ENCODE measurements at regions of chr17 and their contacts with region 1.

Region 1: GRCh38 chr17:4858882-4859260 is 25.7 kb downstream of the MINK1 start:
- DNase-seq: no peak
- H3K4me3 ChIP-seq: peak overlapping the region in 1 of 4 experiments; percentile 24; a peak in 2 of 8 replicates
- H3K27ac ChIP-seq: peak overlapping the region; percentile 62; the same call in 1 of the 2 replicates
- H3K4me1 ChIP-seq: peaks cover 22 to 41% (median 34%) of the 10 kb centered on the region in 4 experiments
- H3K27me3 ChIP-seq: no peaks in the 10 kb centered on the region
- CTCF ChIP-seq: no peak
- EP300 ChIP-seq: no peak
- POLR2A ChIP-seq: no peak
- RAD21 ChIP-seq: no peak

Region 2: DNA sequence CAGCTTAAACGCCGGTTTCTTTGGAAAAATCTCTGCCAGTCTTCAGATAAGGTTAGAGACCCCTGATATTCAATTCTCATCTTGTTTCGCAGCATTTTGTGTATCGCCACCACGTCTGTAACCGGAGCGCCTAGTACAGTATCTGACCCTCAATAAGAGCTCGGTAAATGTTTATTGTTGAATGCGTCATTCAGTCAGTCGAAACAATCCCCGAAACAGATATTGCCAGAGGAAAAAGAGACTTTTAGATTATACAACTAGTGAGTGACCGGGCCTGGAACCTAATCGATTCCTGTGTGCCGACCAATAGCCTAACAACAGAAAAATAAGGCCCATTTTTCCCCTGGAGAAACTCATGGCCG is 155.6 kb before region 1 on chr17:
- CTCF ChIA-PET with region 1: interaction called, 3 read pairs
- POLR2A ChIA-PET with region 1: interaction called, 10 read pairs
- DNase-seq: no peak
- H3K4me3 ChIP-seq: peak overlapping the region; percentile 91 to 98 (median 94)
- H3K27ac ChIP-seq: peak overlapping the region; percentile 87
- H3K4me1 ChIP-seq: peaks cover 0 to 20% (median 10%) of the 10 kb centered on the region in 4 experiments; a peak in 6 of 7 replicates
- H3K27me3 ChIP-seq: no peaks in the 10 kb centered on the region
- CTCF ChIP-seq: no peak
- EP300 ChIP-seq: no peak
- POLR2A ChIP-seq: no peak
- RAD21 ChIP-seq: no peak

Region 3: DNA sequence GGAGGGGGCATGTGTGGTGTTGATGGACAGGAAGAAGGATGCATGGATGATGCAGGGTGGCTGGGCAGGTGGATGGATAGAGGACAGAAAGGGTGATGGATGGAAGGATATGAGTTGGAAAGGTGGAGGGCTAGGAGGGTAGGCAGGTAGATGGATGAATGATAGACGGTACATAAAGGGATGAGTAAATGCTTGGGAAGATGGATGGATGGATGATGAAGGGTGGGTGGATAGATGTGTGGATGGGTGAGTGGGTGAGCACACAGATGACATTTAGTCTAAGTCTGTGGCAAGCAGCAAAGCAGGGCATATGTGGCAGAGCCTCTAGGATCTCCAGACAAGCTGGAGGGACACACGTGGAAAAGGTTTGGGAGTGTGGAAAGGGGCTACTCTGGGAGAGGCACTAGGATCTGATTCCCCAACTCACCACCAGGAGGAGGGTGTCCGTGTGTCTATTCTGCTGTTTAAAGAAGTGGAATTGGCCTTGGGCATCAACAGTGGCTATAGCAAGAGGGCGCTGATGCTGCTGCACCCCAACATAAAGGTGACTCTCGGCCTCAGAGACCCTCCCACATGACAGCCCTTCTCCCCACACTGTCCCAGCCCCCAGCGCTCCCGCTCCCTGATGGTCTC is 43.7 kb before region 1 on chr17:
- CTCF ChIA-PET with region 1: interaction called, 11 read pairs
- POLR2A ChIA-PET with region 1: interaction called, 3 read pairs
- DNase-seq: no peak
- H3K4me3 ChIP-seq: no peak overlapping the region
- H3K27ac ChIP-seq: no peak overlapping the region
- H3K4me1 ChIP-seq: no peaks in the 10 kb centered on the region
- H3K27me3 ChIP-seq: no peaks in the 10 kb centered on the region
- CTCF ChIP-seq: peak; percentile 58 to 80 (median 76)
- EP300 ChIP-seq: no peak
- POLR2A ChIP-seq: no peak
- RAD21 ChIP-seq: peak; percentile 54 to 59

Region 4: DNA sequence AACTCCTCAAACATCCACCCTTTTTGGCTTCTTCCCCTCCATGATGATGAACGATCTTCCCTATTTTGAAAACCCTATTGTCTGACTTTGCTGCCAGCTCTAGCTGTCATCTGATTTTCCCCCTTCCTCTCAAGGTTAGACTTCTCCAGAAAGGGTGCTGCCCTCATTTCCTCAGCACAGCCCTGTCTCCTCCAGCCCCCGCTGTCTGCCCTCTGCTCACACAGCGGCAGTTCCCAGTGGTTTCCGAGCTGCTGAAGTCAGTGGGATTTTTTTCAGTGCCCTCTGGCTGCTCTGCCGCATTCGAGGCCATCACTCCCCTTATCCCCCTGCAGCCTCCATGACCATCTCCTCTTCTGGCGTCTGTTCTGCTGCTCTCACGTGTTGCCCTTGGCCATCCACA is 13.9 kb after region 1 on chr17:
- CTCF ChIA-PET with region 1: interaction called, 13 read pairs
- POLR2A ChIA-PET with region 1: interaction called, 5 read pairs
- DNase-seq: no peak
- H3K4me3 ChIP-seq: no peak overlapping the region
- H3K27ac ChIP-seq: no peak overlapping the region
- H3K4me1 ChIP-seq: peaks cover 0 to 7% (median 4%) of the 10 kb centered on the region in 4 experiments; a peak in 6 of 7 replicates
- H3K27me3 ChIP-seq: no peaks in the 10 kb centered on the region
- CTCF ChIP-seq: no peak
- EP300 ChIP-seq: no peak
- POLR2A ChIP-seq: no peak
- RAD21 ChIP-seq: no peak

Region 5: DNA sequence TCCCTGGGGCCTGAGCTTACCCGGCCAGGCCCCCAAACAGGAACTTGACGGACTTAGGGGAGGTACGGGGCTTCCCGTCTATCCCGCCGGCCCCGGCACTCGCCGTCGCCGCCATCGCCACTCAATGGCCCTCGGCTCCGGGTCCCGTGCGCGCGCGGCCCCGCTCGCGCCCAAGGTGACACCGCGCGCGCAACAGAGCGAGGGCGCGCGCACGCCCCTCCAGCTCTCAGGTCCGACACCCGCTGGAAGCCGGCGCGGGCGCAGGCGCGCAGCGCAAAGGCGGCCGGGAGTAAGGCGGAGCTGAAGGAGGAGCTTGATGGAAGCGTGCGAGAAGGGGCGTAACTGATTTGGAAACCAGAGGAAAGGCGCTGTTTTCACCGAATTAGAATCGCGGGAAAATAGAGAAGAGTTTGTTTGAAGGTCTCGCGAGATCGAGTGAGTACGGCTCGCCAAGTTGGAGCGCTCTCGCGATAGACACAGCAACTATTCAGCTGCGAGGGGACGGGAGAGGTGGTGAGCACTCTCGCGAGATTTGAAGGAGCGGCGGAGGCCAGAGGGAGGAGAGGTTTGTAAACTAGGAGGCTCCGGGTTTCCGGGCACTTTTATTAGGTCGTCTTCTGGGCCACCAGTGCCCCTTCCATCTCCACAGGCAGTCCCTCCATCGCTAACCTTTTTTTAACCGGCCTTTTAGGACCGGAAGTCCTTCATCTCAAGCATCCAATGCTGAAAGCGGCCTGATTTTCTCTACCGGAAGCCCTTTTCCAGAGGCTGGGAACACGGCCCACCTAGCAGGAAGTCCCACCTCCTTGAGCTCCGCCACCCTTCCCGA is 81.1 kb after region 1 on chr17 and contains the starts of genes RNF167 and SLC25A11:
- CTCF ChIA-PET with region 1: no interaction called
- POLR2A ChIA-PET with region 1: no interaction called
- DNase-seq: peak; percentile 91 to 95
- H3K4me3 ChIP-seq: peak within 1 kb of the TSS; percentile 85 to 94 (median 90)
- H3K27ac ChIP-seq: peak within 1 kb of the TSS; percentile 88
- H3K4me1 ChIP-seq: peaks cover 0 to 11% (median 6%) of the 10 kb centered on the region in 4 experiments; a peak in 5 of 7 replicates
- H3K27me3 ChIP-seq: no peaks in the 10 kb centered on the region
- CTCF ChIP-seq: no peak
- EP300 ChIP-seq: no peak
- POLR2A ChIP-seq: peak; percentile 76 to 85
- RAD21 ChIP-seq: no peak
- total RNA-seq, gene RNF167: 140 and 147 TPM in 2 replicates
- total RNA-seq, gene SLC25A11: 55.9 and 65.2 TPM in 2 replicates